Activated CD4-positive, alpha-beta memory T cell treated with anti-CD3 and anti-CD28 coated beads for 36 hours (primary cell): ENCODE measurements at regions of chr1 and their contacts with region 1.

Region 1: DNA sequence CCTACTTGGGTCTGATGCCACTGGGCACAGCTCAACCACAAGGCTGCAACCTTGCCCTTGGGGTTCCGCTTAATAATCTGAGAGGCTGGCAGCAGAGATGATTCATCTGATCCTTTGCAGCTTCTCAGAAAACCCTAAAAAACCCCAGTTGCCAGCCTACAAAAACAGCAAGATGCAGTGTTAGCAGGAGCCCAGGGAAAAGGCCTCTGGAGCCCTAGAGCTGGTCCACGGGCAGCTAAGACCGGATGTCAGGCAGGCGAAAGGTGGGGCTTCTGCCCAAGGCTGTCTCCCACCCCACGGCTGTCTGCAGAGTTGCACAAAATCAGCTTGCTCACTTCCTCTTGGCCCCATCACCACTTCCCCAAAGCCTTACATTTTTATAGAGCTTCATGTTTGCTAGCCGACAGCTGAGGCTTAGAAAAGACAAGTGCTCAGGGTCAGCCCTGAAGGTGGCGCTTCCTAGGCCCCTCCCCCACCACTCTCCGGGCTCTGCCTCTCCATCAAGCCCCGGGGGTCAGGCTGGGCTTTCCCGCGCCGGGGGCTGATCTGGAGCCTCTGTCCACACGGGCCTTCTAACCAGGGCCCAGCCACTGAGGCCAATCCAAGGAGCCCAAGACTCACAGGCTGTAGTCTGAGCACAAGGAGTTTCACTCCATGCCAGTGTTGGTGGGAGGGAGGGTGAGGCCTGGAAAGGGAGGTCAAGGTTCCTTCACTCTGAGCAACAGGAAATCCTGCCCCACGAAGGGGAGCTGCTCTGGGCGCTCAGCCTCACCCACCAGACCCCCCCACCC is 4.2 kb upstream of the ADORA3 start:
- DNase-seq: peak; percentile 83
- H3K4me3 Mint-ChIP-seq: peak overlapping the region; percentile 62
- H3K27ac Mint-ChIP-seq: peak overlapping the region; percentile 94
- H3K4me1 Mint-ChIP-seq: peaks cover 62% of the 10 kb centered on the region
- H3K27me3 Mint-ChIP-seq: no peaks in the 10 kb centered on the region

Region 2: GRCh38 chr1:111192658-111193519 is 314.7 kb before region 1 on chr1:
- CTCF ChIA-PET with region 1: no interaction called
- POLR2A ChIA-PET with region 1: no interaction called
- intact Hi-C with region 1: no loop called
- DNase-seq: peak; percentile 49
- H3K4me3 Mint-ChIP-seq: no peak overlapping the region
- H3K27ac Mint-ChIP-seq: peak overlapping the region; percentile 97
- H3K4me1 Mint-ChIP-seq: peaks cover 96% of the 10 kb centered on the region
- H3K27me3 Mint-ChIP-seq: no peaks in the 10 kb centered on the region

Region 3: DNA sequence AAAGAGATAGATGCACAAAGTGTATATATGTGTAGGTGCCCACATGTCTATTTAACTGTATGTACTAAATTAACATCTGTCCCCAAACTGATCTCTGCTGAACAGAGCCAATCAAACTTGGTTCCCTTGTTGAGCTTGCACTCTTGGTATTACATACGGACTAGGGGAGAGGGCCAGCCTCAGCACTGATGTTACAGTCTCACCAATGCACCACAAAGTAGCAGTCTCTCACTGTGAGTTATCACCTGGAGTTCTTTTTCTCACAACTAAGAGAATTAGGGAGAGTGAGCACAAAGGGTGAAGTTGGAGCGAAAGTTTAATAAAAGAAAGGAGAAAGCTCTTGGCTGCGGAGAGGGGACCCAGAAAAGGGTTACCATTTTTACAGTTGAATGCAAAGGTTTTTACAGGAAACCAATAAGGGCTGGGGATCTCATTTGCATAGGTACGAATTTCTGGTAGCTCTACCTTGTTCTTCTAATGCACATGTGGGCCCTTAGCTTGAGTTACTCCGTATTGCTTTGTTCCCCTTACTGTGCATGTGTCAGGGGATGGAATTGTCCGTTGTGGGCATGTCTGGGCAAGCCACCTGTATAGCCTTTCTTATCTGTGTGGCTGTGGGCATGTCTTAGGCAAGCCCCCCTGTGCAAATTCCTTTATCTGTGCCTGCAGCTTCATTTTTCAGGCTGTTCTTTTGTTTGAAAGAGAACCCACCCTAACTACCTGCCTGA is 293.4 kb before region 1 on chr1:
- CTCF ChIA-PET with region 1: no interaction called
- POLR2A ChIA-PET with region 1: no interaction called
- intact Hi-C with region 1: loop called (anchors 2 kb)
- DNase-seq: peak; percentile 45
- H3K4me3 Mint-ChIP-seq: peak overlapping the region; percentile 66
- H3K27ac Mint-ChIP-seq: peak overlapping the region; percentile 95
- H3K4me1 Mint-ChIP-seq: peaks cover 72% of the 10 kb centered on the region
- H3K27me3 Mint-ChIP-seq: peaks cover 3% of the 10 kb centered on the region

Region 4: GRCh38 chr1:111369177-111369576 is 138.4 kb before region 1 on chr1:
- CTCF ChIA-PET with region 1: no interaction called
- POLR2A ChIA-PET with region 1: no interaction called
- intact Hi-C with region 1: no loop called
- DNase-seq: no peak
- H3K4me3 Mint-ChIP-seq: no peak overlapping the region
- H3K27ac Mint-ChIP-seq: no peak overlapping the region
- H3K4me1 Mint-ChIP-seq: no peaks in the 10 kb centered on the region
- H3K27me3 Mint-ChIP-seq: peaks cover 26% of the 10 kb centered on the region

Region 5: DNA sequence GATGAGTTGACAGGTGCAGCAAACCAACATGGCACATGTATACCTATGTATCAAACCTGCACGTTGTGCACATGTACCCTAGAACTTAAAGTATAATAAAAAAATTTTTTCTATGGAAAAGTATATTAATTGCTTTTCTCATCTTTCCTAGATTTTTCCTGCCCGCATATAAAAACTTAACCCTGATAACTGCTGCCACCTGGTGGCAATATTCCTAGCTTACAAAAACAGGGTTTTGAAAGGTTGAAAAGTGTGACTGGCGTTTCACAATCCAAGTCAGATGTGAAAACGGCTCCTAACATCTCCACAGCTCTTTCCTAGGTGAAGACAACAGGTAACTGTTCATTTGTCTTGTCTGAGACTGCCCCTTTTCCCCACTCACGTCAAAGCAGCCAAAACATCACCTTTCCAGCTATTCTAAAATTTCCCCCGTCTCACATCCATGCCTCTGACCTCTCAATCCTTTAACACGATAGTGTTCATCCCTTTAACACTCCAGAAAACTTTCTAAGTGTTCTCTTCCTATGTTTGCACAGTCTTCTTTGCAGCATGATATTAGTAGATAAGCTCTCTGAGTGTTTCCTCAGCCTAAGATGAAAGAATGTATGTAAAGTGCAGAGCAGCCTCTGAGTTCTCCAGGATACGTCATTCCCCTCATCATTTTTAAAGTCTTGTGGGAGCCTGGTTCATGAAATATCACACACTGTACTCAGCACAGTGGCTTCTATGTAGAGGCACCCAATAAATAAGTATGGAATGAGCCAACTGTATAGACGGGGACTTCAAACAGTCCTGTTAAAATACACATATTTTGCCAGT is 107.6 kb before region 1 on chr1:
- CTCF ChIA-PET with region 1: no interaction called
- POLR2A ChIA-PET with region 1: no interaction called
- intact Hi-C with region 1: no loop called
- DNase-seq: peak; percentile 40
- H3K4me3 Mint-ChIP-seq: no peak overlapping the region
- H3K27ac Mint-ChIP-seq: no peak overlapping the region
- H3K4me1 Mint-ChIP-seq: peaks cover 29% of the 10 kb centered on the region
- H3K27me3 Mint-ChIP-seq: no peaks in the 10 kb centered on the region

Region 6: GRCh38 chr1:111481387-111482221 is 26.0 kb before region 1 on chr1:
- CTCF ChIA-PET with region 1: interaction called, 30 read pairs
- POLR2A ChIA-PET with region 1: interaction called, 18 read pairs
- intact Hi-C with region 1: no loop called
- DNase-seq: peak; percentile 82
- H3K4me3 Mint-ChIP-seq: no peak overlapping the region
- H3K27ac Mint-ChIP-seq: no peak overlapping the region
- H3K4me1 Mint-ChIP-seq: peaks cover 25% of the 10 kb centered on the region
- H3K27me3 Mint-ChIP-seq: no peaks in the 10 kb centered on the region

Region 7: GRCh38 chr1:111603979-111604378 is 96.4 kb after region 1 on chr1:
- CTCF ChIA-PET with region 1: interaction called, 46 read pairs
- POLR2A ChIA-PET with region 1: interaction called, 22 read pairs
- intact Hi-C with region 1: loop called (anchors 1 kb)
- DNase-seq: peak; percentile 92
- H3K4me3 Mint-ChIP-seq: peak overlapping the region; percentile 70
- H3K27ac Mint-ChIP-seq: peak overlapping the region; percentile 96
- H3K4me1 Mint-ChIP-seq: peaks cover 72% of the 10 kb centered on the region
- H3K27me3 Mint-ChIP-seq: no peaks in the 10 kb centered on the region

Region 8: GRCh38 chr1:111656086-111657017 is 148.7 kb after region 1 on chr1:
- CTCF ChIA-PET with region 1: interaction called, 14 read pairs
- POLR2A ChIA-PET with region 1: no interaction called
- intact Hi-C with region 1: loop called (anchors 2 kb)
- DNase-seq: no peak
- H3K4me3 Mint-ChIP-seq: no peak overlapping the region
- H3K27ac Mint-ChIP-seq: no peak overlapping the region
- H3K4me1 Mint-ChIP-seq: peaks cover 48% of the 10 kb centered on the region
- H3K27me3 Mint-ChIP-seq: no peaks in the 10 kb centered on the region

Region 9: DNA sequence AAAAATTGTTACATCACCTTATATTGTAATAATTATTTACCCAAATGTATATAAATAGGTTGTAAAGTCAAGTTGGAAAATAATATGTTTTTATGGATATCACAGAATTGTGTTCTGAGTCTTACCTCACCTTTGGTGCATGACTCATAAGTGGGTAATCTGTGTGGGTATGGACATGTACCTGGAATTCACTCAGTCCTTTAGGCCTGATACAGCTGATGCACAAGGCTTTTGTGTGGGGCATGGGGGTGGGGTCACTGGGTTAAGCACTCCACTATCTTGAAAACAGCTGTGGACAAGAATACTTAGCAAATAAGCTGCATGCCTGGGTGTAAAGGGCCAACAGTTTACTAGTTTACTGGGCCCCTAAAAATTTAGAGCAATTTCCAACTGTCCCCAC is 197.2 kb after region 1 on chr1:
- CTCF ChIA-PET with region 1: interaction called, 15 read pairs
- POLR2A ChIA-PET with region 1: no interaction called
- intact Hi-C with region 1: no loop called
- DNase-seq: no peak
- H3K4me3 Mint-ChIP-seq: no peak overlapping the region
- H3K27ac Mint-ChIP-seq: no peak overlapping the region
- H3K4me1 Mint-ChIP-seq: peaks cover 66% of the 10 kb centered on the region
- H3K27me3 Mint-ChIP-seq: no peaks in the 10 kb centered on the region

Region 10: DNA sequence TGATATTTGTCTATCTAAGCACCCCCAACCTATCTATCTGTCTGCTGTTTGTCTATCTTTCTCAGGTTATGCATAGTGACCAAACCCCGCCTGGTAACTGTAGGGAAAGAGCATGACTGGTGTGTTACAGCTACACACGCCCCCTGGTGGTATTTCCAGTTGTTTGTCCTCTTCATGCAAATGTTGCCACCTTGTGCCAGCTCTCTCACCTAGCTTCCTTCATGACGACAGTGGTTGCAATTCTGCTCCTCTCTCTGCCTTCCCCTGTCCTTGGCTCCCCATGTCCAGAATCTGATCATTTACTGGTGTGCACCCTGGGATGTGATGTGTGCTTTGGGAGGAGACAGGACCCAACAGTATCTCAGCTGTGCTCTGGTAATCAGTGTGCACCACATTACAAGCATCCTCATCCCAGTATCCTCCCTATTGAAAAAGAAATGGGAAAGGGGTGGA is 239.7 kb after region 1 on chr1:
- CTCF ChIA-PET with region 1: interaction called, 59 read pairs
- POLR2A ChIA-PET with region 1: interaction called, 3 read pairs
- intact Hi-C with region 1: loop called (anchors 1 kb)
- DNase-seq: peak; percentile 80
- H3K4me3 Mint-ChIP-seq: no peak overlapping the region
- H3K27ac Mint-ChIP-seq: no peak overlapping the region
- H3K4me1 Mint-ChIP-seq: peaks cover 3% of the 10 kb centered on the region
- H3K27me3 Mint-ChIP-seq: no peaks in the 10 kb centered on the region